Activated CD4-positive, alpha-beta memory T cell treated with anti-CD3 and anti-CD28 coated beads, Interleukin-2, amount 10 ng/mL, durations not matched to agents 7 days and 5 days (primary cell): ENCODE measurements at regions of chr14 and their contacts with region 1.

Region 1: GRCh38 chr14:77067632-77068514 is 30.2 kb upstream of the CIPC start:
- DNase-seq: peak; percentile 66
- H3K4me3 Mint-ChIP-seq: no peak overlapping the region
- H3K27ac Mint-ChIP-seq: no peak overlapping the region
- H3K4me1 Mint-ChIP-seq: peaks cover 2% of the 10 kb centered on the region
- H3K27me3 Mint-ChIP-seq: peaks cover 17% of the 10 kb centered on the region

Region 2: DNA sequence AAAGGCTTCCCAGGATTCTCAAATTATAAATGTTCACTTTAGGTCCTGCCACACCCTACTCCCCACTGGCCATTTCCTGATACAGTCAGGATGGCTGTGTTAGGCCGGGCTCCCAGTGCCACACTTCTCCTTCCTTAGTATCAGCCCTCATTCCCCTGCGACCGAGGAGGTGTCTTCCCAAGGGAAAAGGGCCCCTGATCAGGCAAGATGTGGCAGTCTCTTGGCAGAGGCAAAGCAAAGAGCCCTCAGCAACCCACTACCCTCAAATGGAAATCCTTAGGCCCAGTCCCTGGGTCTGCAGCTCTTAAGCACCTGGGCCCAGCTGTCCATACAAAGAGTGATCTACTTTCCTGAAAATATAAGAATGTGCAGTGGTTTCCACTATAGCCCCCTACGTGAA is 403.1 kb before region 1 on chr14:
- CTCF ChIA-PET with region 1: no interaction called
- POLR2A ChIA-PET with region 1: no interaction called
- DNase-seq: no peak
- H3K4me3 Mint-ChIP-seq: no peak overlapping the region
- H3K27ac Mint-ChIP-seq: no peak overlapping the region
- H3K4me1 Mint-ChIP-seq: no peaks in the 10 kb centered on the region
- H3K27me3 Mint-ChIP-seq: peaks cover 7% of the 10 kb centered on the region

Region 3: GRCh38 chr14:76867516-76868453 is 200.1 kb before region 1 on chr14:
- CTCF ChIA-PET with region 1: interaction called, 436 read pairs
- POLR2A ChIA-PET with region 1: interaction called, 8 read pairs
- DNase-seq: peak; percentile 33
- H3K4me3 Mint-ChIP-seq: no peak overlapping the region
- H3K27ac Mint-ChIP-seq: no peak overlapping the region
- H3K4me1 Mint-ChIP-seq: peaks cover 18% of the 10 kb centered on the region
- H3K27me3 Mint-ChIP-seq: peaks cover 12% of the 10 kb centered on the region

Region 4: DNA sequence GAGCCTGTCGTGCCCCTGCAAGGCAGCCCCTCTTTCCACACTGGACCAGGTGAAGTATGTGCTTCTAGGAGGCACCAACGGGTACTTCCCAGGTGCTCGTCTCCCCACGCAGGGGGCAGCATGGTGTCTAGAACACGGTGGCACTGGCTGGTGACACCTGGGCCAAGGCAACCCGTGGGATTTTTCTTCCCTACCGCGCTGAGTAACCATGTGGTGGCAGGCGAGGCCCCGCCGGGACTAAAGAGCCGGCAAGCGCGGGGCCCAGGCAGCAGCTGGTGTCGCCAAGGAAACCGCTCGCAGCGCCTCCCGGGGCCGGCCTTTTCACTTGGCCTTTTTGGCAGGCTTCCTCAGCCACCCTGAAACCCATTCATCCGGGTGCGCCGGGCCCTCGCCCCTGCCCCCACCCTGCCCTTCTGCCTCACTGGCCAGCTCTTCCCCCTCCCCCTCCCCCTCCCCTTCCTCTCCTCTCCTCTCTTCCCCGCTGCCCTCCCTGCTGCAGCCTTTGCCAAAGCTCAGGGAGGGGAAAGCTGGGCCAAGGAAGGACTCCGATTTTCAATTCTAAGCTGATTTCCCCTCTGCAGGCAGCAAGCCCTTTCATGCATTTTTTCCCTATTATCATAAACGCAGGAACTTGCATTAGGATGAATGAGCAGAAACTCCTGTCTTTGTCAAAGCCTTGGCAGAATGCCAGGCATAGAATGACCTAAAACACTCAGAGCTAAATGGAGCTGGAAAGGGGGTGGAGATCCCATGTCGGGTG is 120.6 kb before region 1 on chr14:
- CTCF ChIA-PET with region 1: interaction called, 18 read pairs
- POLR2A ChIA-PET with region 1: interaction called, 5 read pairs
- DNase-seq: peak; percentile 82
- H3K4me3 Mint-ChIP-seq: no peak overlapping the region
- H3K27ac Mint-ChIP-seq: peak overlapping the region; percentile 54
- H3K4me1 Mint-ChIP-seq: peaks cover 53% of the 10 kb centered on the region
- H3K27me3 Mint-ChIP-seq: no peaks in the 10 kb centered on the region

Region 5: GRCh38 chr14:77023001-77023996 is 44.6 kb before region 1 on chr14:
- CTCF ChIA-PET with region 1: interaction called, 32 read pairs
- POLR2A ChIA-PET with region 1: interaction called, 14 read pairs
- DNase-seq: peak; percentile 38
- H3K4me3 Mint-ChIP-seq: peak overlapping the region; percentile 61
- H3K27ac Mint-ChIP-seq: peak overlapping the region; percentile 84
- H3K4me1 Mint-ChIP-seq: peaks cover 46% of the 10 kb centered on the region
- H3K27me3 Mint-ChIP-seq: no peaks in the 10 kb centered on the region

Region 6: DNA sequence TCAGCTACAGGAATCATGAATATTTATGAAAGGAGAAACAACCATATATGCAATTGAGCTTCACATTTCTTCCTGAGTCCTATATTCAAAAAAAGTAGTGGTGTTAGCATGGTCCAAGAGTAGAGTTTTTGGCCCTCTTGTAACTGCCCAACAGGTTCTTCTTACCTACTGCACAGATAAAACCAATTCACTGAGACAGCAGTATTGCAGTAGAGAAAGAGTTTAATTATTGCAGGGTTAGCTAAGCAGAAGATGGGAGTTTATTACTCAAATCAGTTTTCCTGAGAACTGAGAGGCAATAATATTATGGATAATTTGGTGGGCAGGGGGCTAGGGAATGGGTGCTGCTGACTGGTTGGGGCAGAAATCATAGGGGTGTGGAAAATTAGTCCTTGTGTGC is 23.6 kb after region 1 on chr14:
- CTCF ChIA-PET with region 1: interaction called, 26 read pairs
- POLR2A ChIA-PET with region 1: no interaction called
- DNase-seq: no peak
- H3K4me3 Mint-ChIP-seq: no peak overlapping the region
- H3K27ac Mint-ChIP-seq: no peak overlapping the region
- H3K4me1 Mint-ChIP-seq: peaks cover 20% of the 10 kb centered on the region
- H3K27me3 Mint-ChIP-seq: peaks cover 3% of the 10 kb centered on the region